Heart left ventricle (tissue), 16 donors: ENCODE measurements at regions of chr11 and their contacts with region 1.

Region 1: GRCh38 chr11:2305140-2305840 is 3.5 kb downstream of the TSPAN32 start:
- DNase-seq: peak; percentile 86 to 95 (median 87)
- ATAC-seq: peak in 3 of 4 donors; percentile 17 to 51 (median 47)
- H3K4me3 ChIP-seq: peak overlapping the region in 6 of 12 donors; percentile 5 to 33 (median 20)
- H3K27ac ChIP-seq: peak overlapping the region in 11 of 12 donors; percentile 64 to 98 (median 88)
- H3K4me1 ChIP-seq: peaks cover 9 to 64% (median 32%) of the 10 kb centered on the region in 12 donors
- H3K27me3 ChIP-seq: no peaks in the 10 kb centered on the region
- CTCF ChIP-seq: peak; percentile 85 to 97 (median 92)
- POLR2A ChIP-seq: no peak

Region 2: DNA sequence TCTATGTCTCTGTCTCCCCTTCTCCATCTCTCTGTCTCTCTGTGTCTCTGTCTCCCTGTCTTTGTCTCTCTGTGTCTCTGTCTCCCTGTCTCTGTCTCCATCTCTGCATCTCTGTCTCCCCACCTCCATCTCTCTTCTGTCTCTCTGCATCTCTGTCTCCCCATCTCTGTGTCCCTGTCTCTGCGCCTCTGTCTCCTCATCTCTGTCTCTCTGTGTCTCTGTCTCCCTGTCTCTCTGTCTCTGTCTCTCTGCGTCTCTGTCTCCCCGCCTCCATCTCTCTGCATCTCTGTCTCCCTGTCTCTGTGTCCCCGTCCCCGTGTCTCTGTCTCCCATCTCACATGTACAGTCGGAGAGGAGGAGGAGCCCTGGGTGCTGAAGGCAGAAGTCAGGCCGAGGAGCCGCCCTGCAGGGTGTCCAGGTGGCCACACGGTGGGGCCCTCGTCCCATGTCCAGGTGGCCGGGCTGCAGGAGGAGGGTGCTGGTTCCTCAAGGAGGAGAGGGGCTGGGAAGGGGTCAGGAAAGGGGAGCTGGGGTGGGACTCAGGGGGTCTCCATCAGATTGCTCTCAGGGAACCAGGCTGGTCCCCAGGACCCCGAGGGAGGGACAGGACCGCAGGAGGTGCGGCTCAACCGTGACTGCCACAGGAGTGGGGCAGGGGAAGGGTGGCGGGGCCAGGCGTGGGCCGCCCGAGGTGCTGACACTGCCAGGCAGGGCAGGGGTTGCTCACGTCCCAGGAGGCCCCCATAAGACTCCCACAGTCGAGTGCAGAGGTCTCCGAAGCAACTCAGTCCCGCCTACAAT is 108.1 kb before region 1 on chr11:
- intact Hi-C with region 1: loop called in 7 of 10 experiments (anchors 2 to 5 kb)
- DNase-seq: peak; percentile 67 to 84 (median 75)
- ATAC-seq: peak; percentile 60 to 87 (median 72)
- H3K4me3 ChIP-seq: no peak overlapping the region
- H3K27ac ChIP-seq: no peak overlapping the region
- H3K4me1 ChIP-seq: peaks cover 0 to 6% (median 0%) of the 10 kb centered on the region in 12 donors
- H3K27me3 ChIP-seq: peaks cover 0 to 18% (median 0%) of the 10 kb centered on the region in 9 donors
- CTCF ChIP-seq: peak; percentile 59 to 85 (median 76)
- POLR2A ChIP-seq: no peak

Region 3: GRCh38 chr11:2382936-2383851 is 77.9 kb after region 1 on chr11:
- intact Hi-C with region 1: loop called in 5 of 10 experiments (anchors 2 to 5 kb)
- DNase-seq: peak; percentile 86 to 92 (median 89)
- ATAC-seq: peak; percentile 43 to 78 (median 54)
- H3K4me3 ChIP-seq: peak overlapping the region in 6 of 12 donors; percentile 8 to 30 (median 18)
- H3K27ac ChIP-seq: peak overlapping the region; percentile 46 to 100 (median 99)
- H3K4me1 ChIP-seq: peaks cover 38 to 100% (median 87%) of the 10 kb centered on the region in 12 donors
- H3K27me3 ChIP-seq: no peaks in the 10 kb centered on the region
- CTCF ChIP-seq: peak in 5 of 12 donors; percentile 7 to 44 (median 25)
- POLR2A ChIP-seq: no peak

Region 4: GRCh38 chr11:2420502-2421225 is 115.4 kb after region 1 on chr11:
- intact Hi-C with region 1: loop called (anchors 1 to 5 kb)
- DNase-seq: peak; percentile 66 to 89 (median 74)
- ATAC-seq: peak; percentile 85 to 95 (median 92)
- H3K4me3 ChIP-seq: peak overlapping the region in 2 of 12 donors; percentile 16 to 18
- H3K27ac ChIP-seq: peak overlapping the region in 1 of 12 donors; percentile 24
- H3K4me1 ChIP-seq: peaks cover 0 to 13% (median 0%) of the 10 kb centered on the region in 12 donors
- H3K27me3 ChIP-seq: peaks cover 0 to 13% (median 0%) of the 10 kb centered on the region in 9 donors
- CTCF ChIP-seq: peak; percentile 89 to 97 (median 93)
- POLR2A ChIP-seq: no peak

Region 5: DNA sequence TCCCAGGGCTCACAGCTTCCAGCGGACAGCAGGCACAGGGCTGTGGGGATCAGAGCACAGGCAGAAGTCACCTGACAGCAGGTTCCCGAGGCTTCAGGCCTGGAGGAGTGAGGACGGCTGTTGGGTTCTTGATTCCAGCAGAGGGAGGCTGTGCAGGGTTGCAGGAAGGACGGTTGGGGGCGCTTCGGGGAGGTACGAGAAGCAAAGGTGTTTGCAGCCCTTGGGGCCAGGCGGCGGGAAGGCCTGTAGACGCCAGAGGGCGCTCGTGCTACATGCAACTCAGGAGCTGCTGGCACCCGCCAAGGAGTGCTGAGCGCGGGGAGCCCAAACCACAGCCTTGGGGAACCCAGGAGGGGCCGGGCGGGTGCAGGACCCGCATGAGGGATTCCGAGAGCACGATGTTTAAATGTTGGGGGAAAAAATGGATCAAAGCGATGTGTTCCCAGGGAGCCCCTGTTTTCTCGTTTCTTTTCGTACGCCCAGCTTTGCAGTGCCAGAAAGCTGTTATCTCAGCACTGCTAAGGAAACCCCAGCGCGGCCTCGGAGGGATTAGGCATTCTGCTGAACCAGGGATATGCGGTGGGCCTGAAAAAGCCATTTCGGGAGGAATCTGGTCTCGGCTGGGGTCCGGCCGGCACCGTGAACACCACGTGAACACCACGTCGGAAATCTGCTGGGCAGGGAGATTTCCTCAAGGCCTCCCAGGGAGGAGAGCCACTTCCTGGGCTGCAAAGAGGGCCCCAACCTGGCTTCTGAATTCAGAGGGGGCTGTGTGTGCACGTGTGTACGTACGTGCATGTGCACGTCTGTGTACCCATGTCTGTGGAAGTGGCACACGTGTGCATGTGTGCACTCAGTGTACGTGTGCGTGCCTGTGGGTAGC is 227.7 kb after region 1 on chr11:
- intact Hi-C with region 1: loop called in 7 of 10 experiments (anchors 5 to 10 kb)
- DNase-seq: peak; percentile 89 to 95 (median 91)
- ATAC-seq: peak; percentile 77 to 90 (median 82)
- H3K4me3 ChIP-seq: peak overlapping the region in 11 of 12 donors; percentile 6 to 58 (median 32)
- H3K27ac ChIP-seq: peak overlapping the region in 10 of 12 donors; percentile 5 to 70 (median 52)
- H3K4me1 ChIP-seq: peaks cover 0 to 24% (median 17%) of the 10 kb centered on the region in 12 donors
- H3K27me3 ChIP-seq: no peaks in the 10 kb centered on the region
- CTCF ChIP-seq: peak; percentile 98 to 100 (median 99)
- POLR2A ChIP-seq: no peak